Activated T-helper 1 cell treated with anti-CD3 and anti-CD28 coated beads, Interleukin-12 subunit alpha, Interleukin-12 subunit beta, Interleukin-2, Interleukin-4 antibody, amounts not matched to agents 30 ng/mL and 10 ng/mL and 1 ng/mL, durations not matched to agents 14 hours and 24 hours and 36 hours (primary cell): ENCODE measurements at regions of chr17 and their contacts with region 1.

Region 1: GRCh38 chr17:71900621-71901229 is 220.1 kb upstream of the SOX9 start:
- DNase-seq: no peak
- H3K4me3 Mint-ChIP-seq: no peak overlapping the region
- H3K27ac Mint-ChIP-seq: no peak overlapping the region
- H3K4me1 Mint-ChIP-seq: no peaks in the 10 kb centered on the region
- H3K27me3 Mint-ChIP-seq: no peaks in the 10 kb centered on the region

Region 2: DNA sequence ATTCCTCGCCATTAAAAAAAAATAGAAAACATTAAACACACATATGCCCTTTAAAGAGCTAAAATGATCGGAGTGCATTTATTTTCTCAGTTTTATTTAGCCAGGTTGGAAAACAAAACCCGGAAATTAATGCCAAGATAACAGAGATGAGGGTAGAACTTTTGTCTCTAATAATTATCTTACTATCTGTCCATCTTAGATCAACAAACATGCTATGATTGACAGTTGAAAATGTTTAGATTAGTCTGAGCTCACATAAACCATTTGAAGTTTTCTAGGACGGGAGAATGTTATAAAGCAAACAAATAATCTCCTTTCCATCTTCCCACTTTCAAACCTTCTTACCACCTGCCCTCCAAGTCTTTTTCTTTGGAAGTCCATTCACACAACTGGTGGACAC is 113.3 kb before region 1 on chr17:
- intact Hi-C with region 1: loop called (anchors 10 kb)
- DNase-seq: no peak
- H3K4me3 Mint-ChIP-seq: no peak overlapping the region
- H3K27ac Mint-ChIP-seq: no peak overlapping the region
- H3K4me1 Mint-ChIP-seq: no peaks in the 10 kb centered on the region
- H3K27me3 Mint-ChIP-seq: no peaks in the 10 kb centered on the region

Region 3: DNA sequence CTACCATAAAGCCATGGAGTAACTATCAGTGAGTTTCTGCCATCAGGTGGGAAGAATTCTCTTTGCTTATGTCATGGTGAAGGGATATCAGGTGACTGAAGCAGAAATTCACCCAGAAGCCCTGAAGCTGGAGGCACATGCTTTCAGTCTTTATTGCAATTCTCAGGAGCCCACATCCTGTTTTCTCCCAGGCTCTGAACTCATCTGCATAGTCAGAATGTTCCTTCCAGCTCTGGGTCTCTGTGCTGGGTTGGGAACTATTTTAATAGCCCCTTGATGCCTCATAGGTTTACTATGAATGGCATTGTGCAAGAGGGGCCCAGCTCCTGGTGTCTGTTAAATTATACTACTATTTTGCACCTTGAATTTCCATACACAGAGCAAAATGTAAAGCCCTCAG is 21.7 kb after region 1 on chr17:
- intact Hi-C with region 1: no loop called
- DNase-seq: no peak
- H3K4me3 Mint-ChIP-seq: no peak overlapping the region
- H3K27ac Mint-ChIP-seq: no peak overlapping the region
- H3K4me1 Mint-ChIP-seq: no peaks in the 10 kb centered on the region
- H3K27me3 Mint-ChIP-seq: no peaks in the 10 kb centered on the region